Activated T-helper 1 cell treated with anti-CD3 and anti-CD28 coated beads, Interleukin-12 subunit alpha, Interleukin-12 subunit beta, Interleukin-2, Interleukin-4 antibody, amounts not matched to agents 30 ng/mL and 10 ng/mL and 1 ng/mL, durations not matched to agents 14 hours and 24 hours and 36 hours (primary cell): ENCODE measurements at regions of chr9 and their contacts with region 1.

Region 1: DNA sequence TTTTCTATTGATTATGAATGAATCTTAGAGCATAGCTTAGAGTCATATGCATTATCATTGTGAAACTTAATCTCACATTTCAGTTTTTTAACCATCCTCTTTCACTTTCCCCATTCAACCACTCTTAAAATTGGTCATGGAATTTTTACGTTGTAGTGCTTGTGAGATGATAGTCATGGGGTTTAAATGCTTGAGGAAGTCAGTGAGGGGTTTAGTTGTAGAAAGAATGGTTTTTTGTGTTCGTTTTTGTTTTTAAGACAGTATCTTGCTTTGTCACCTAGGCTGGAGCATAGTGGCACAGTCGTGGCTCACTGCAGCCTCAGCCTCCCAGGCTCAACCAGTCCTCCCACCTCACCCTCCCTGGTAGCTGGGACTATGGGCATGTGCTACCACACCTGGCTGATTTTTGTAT is 19.6 kb downstream of the UGCG start:
- DNase-seq: no peak
- H3K4me3 Mint-ChIP-seq: peak overlapping the region; percentile 2
- H3K27ac Mint-ChIP-seq: peak overlapping the region; percentile 74
- H3K4me1 Mint-ChIP-seq: peaks cover 54% of the 10 kb centered on the region
- H3K27me3 Mint-ChIP-seq: peaks cover 4% of the 10 kb centered on the region

Region 2: DNA sequence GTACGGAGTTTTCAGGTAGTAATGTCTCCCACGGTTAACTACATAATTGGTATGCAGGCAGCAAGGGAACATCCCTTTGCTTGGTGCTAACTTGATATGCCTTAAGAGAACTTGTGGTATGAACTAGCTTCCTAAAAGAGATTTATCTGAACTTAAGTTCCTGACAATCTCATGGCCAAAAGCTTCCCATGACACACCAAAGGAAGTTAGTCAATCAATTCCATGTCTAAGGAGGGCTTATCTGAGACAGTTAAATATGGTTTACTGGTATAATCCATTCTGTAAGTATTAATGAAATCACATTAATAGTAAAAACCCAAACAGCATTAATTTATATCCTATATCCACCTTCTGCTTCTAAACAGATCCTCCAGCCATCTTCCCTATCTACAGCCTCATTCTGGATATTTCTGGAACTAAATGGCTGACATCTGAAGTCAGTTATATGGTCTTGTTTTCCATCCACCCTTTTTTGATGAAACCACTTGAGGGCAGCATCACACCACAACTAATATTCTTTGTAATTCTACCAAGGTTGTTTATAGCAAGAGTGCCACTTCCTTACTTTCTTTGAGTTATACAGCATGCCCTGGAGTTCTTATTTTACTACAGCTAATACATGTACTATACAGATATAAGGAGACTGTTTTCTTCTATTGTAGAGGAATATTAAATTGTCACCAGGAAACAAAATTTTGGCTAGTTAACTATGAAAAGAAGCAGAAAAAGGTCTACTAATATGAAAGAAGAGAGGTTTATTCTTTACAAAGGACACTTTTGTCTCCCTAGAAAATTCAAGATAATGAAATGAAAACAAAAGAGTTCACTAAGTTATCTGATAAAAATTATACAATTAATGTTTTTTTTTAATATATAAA is 156.2 kb before region 1 on chr9:
- intact Hi-C with region 1: loop called (anchors 1 kb)
- DNase-seq: peak; percentile 39
- H3K4me3 Mint-ChIP-seq: no peak overlapping the region
- H3K27ac Mint-ChIP-seq: no peak overlapping the region
- H3K4me1 Mint-ChIP-seq: no peaks in the 10 kb centered on the region
- H3K27me3 Mint-ChIP-seq: peaks cover 2% of the 10 kb centered on the region

Region 3: GRCh38 chr9:111937781-111938426 is 21.7 kb after region 1 on chr9:
- intact Hi-C with region 1: loop called (anchors 1 kb)
- DNase-seq: peak; percentile 28
- H3K4me3 Mint-ChIP-seq: peak overlapping the region; percentile 63
- H3K27ac Mint-ChIP-seq: peak overlapping the region; percentile 88
- H3K4me1 Mint-ChIP-seq: peaks cover 31% of the 10 kb centered on the region
- H3K27me3 Mint-ChIP-seq: no peaks in the 10 kb centered on the region

Region 4: DNA sequence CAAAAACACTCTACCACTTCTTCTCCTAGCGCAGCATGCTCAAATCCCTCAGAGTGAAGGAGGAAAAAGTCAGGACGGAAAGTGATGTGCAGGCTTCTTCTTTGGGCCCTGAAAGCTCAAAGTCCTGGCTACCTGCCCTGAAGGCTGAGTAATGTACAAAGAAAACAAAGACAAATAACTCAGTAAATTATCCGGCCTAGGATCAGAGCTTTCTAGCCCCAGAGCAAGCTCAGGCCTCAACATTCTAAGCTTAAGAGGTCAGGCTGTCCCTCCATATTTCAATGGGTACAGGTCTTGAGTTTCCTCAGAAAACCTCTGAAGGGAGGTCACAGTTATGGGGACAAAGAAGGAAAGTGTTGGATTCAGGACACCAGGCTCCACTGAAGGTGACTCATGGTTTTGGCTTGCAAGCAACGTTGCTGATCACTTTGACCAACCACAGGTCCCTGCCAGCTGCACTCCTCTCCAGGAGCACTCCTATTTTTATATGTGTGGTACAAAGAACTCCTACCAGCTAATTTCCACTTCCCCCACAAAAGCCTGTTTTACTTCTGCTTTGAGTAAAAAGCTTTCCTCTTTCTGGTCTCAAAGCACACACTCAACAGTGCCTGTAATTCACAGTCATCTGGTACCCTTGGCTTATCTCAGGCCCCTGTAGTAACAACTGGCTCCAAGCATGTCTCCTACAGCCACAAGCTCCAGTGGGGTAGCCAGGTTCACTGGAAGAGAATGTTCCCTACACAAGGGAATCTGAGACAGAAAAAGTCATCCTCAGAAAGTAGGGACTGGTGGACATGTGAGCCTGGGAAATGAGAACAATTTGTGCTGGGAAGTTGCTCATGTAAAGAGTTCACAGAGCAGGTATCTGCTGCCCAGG is 96.0 kb after region 1 on chr9:
- intact Hi-C with region 1: loop called (anchors 1 kb)
- DNase-seq: no peak
- H3K4me3 Mint-ChIP-seq: no peak overlapping the region
- H3K27ac Mint-ChIP-seq: no peak overlapping the region
- H3K4me1 Mint-ChIP-seq: peaks cover 21% of the 10 kb centered on the region
- H3K27me3 Mint-ChIP-seq: peaks cover 50% of the 10 kb centered on the region

Region 5: DNA sequence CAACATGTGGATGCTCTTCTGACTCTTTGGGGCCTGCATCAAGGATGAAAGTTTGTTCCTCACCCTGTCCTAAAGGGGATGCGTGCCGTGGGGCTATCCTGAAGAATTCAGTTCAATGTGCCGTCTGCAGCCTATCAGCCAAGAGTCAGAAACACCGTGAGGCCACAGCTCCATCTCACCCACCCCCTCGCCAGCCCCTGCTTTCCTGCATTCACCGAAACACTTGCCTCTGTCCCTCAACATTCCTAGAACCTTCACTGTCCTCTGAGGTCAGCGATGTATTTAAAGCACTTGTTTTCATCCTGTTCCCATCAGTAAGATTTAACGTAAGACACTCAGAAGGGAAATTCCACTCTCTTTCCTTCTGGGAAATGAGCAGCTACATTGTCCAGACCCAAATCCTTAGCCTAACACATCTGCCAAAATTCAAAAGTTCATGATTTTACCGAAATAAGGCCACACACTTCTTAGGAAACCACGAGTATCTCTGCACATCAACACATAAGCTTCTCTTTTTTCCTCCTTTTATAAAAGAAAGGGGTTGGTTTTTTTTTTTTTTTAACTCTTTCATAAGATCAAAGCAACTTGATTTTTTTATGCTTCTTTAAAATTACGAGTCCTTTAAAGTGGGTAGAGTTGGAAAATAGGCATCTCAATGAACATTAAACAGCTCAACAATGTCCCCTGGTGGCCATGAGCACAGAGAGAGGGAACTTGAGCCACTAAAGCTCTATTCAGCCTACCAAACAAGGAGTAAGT is 158.2 kb after region 1 on chr9:
- intact Hi-C with region 1: loop called (anchors 1 kb)
- DNase-seq: peak; percentile 35
- H3K4me3 Mint-ChIP-seq: no peak overlapping the region
- H3K27ac Mint-ChIP-seq: no peak overlapping the region
- H3K4me1 Mint-ChIP-seq: peaks cover 36% of the 10 kb centered on the region
- H3K27me3 Mint-ChIP-seq: no peaks in the 10 kb centered on the region

Region 6: DNA sequence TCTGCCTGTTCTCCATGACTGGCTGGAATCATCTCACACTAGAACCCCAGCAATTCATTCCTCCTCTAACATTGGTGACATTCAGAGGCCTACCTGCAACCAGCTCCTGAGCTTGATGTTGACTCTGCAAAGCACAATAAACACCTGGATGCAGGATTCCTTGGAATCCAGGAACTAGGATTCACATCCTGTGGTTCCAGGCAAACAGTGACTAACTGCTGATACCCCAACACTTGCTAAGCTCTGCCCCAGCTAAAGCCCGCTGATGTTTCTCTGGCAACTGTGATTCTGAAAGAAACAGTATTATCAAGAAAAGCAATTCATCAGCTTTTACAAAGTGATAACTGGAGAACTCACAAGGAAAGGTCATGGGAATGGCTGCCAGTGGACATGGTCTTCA is 229.6 kb after region 1 on chr9:
- intact Hi-C with region 1: no loop called
- DNase-seq: no peak
- H3K4me3 Mint-ChIP-seq: no peak overlapping the region
- H3K27ac Mint-ChIP-seq: no peak overlapping the region
- H3K4me1 Mint-ChIP-seq: peaks cover 8% of the 10 kb centered on the region
- H3K27me3 Mint-ChIP-seq: no peaks in the 10 kb centered on the region

Region 7: GRCh38 chr9:112750111-112750767 is 834.0 kb after region 1 on chr9 and contains the start of gene SNX30:
- intact Hi-C with region 1: loop called (anchors 5 kb)
- DNase-seq: peak; percentile 78
- H3K4me3 Mint-ChIP-seq: peak within 1 kb of the TSS; percentile 86
- H3K27ac Mint-ChIP-seq: peak within 1 kb of the TSS; percentile 88
- H3K4me1 Mint-ChIP-seq: peaks cover 67% of the 10 kb centered on the region
- H3K27me3 Mint-ChIP-seq: peaks cover 5% of the 10 kb centered on the region
- total RNA-seq, gene SNX30: 1.9 and 2.1 TPM in 2 replicates